Heart left ventricle (tissue), 16 donors: ENCODE measurements at regions of chr20 and their contacts with region 1.

Region 1: DNA sequence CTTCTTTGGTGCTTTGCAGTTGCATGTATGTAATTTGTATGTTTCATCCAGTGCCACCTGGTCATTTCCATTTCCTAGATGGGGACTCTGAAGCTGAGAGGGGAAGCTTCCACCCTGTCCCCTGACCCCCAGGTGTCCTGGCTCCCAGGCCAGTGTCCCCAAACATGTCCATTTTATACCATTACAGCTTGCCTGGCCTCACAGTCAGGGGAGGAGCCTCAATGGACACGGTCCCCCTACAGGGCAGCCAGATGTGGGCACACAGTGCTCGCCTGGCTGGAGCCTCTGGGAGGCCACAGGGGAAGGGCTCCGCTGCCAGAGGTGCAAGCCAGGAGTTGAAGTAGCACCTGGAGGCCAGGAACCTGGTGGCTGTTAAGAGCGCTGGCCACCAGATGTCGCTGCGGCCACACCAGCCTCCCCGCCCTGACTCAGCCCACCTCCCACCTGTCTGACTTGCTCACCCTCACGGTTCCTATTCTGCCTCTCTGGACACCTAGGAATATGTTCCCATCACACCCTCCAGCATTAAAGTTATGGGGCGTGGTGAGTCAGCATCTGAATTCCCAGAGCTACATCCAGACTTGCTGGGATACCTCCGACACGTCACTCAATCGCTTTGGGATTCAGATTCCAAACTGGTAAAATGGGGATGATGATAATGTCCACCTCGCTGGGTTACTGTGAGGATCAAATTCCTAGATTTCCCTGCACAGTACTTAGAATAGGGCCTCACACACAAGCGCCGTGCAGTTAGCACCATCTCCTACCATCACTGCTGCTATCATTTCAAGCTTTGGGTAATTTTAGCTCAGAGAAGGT is 107.4 kb downstream of the SULF2 start:
- DNase-seq: no peak
- ATAC-seq: no peak
- H3K4me3 ChIP-seq: no peak overlapping the region
- H3K27ac ChIP-seq: no peak overlapping the region
- H3K4me1 ChIP-seq: peaks cover 0 to 26% (median 16%) of the 10 kb centered on the region in 12 donors
- H3K27me3 ChIP-seq: no peaks in the 10 kb centered on the region
- CTCF ChIP-seq: peak; percentile 62 to 82 (median 72)
- POLR2A ChIP-seq: peak in 1 of 2 donors; percentile 23

Region 2: GRCh38 chr20:47704755-47705493 is 27.1 kb after region 1 on chr20:
- intact Hi-C with region 1: loop called in 3 of 10 experiments (anchors 1 to 2 kb)
- DNase-seq: peak; percentile 28 to 65 (median 56)
- ATAC-seq: peak; percentile 78 to 91 (median 88)
- H3K4me3 ChIP-seq: no peak overlapping the region
- H3K27ac ChIP-seq: peak overlapping the region in 8 of 12 donors; percentile 11 to 69 (median 47)
- H3K4me1 ChIP-seq: peaks cover 0 to 50% (median 19%) of the 10 kb centered on the region in 12 donors
- H3K27me3 ChIP-seq: no peaks in the 10 kb centered on the region
- CTCF ChIP-seq: no peak
- POLR2A ChIP-seq: no peak

Region 3: GRCh38 chr20:47725248-47725973 is 47.6 kb after region 1 on chr20:
- intact Hi-C with region 1: loop called in 1 of 10 experiments (anchors 5 kb)
- DNase-seq: peak; percentile 71 to 79 (median 77)
- ATAC-seq: peak in 3 of 4 donors; percentile 60 to 64 (median 61)
- H3K4me3 ChIP-seq: no peak overlapping the region
- H3K27ac ChIP-seq: no peak overlapping the region
- H3K4me1 ChIP-seq: peaks cover 0 to 26% (median 6%) of the 10 kb centered on the region in 12 donors
- H3K27me3 ChIP-seq: no peaks in the 10 kb centered on the region
- CTCF ChIP-seq: peak; percentile 77 to 91 (median 86)
- POLR2A ChIP-seq: no peak